SK-N-SH (cell line): ENCODE measurements at regions of chr6 and their contacts with region 1.

Region 1: DNA sequence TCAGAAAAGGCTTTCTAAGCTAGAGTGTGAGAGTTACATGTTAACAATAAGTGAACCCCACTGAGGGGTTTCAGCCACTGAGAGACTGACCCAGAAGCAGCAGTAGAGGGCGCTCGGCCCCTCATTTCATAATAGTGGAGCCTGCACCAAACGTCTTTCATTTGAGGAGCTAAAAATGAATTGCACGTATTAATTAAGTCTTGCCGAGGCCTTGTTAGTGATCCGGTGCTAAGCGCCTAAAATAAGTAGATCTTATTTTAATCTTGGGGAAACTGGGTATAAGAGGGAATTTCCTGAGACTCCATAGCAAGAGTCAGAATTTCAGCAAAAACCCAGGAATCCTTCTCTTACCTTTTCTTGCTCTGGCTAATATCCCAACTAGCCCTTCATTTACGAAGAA is 209.7 kb downstream of the FARS2 start:
- DNase-seq: peak; percentile 66
- H3K4me3 ChIP-seq: peak overlapping the region in 1 of 2 experiments; percentile 3; a peak in 1 of 4 replicates
- H3K27ac ChIP-seq: no peak overlapping the region; a peak in 2 of 4 replicates
- H3K4me1 ChIP-seq: peaks cover 20 to 35% of the 10 kb centered on the region in 2 experiments; a peak in 3 of 4 replicates
- H3K27me3 ChIP-seq: no peaks in the 10 kb centered on the region
- CTCF ChIP-seq: peak; percentile 98
- EP300 ChIP-seq: no peak
- RAD21 ChIP-seq: peak; percentile 92

Region 2: GRCh38 chr6:5435449-5435848 is 35.6 kb before region 1 on chr6:
- CTCF ChIA-PET with region 1: no interaction called
- POLR2A ChIA-PET with region 1: no interaction called
- DNase-seq: no peak
- H3K4me3 ChIP-seq: no peak overlapping the region
- H3K27ac ChIP-seq: peak overlapping the region in 1 of 2 experiments; percentile 49; a peak in 1 of 4 replicates
- H3K4me1 ChIP-seq: no peaks in the 10 kb centered on the region
- H3K27me3 ChIP-seq: no peaks in the 10 kb centered on the region
- CTCF ChIP-seq: no peak
- EP300 ChIP-seq: no peak
- RAD21 ChIP-seq: no peak

Region 3: GRCh38 chr6:5457041-5457440 is 14.0 kb before region 1 on chr6:
- CTCF ChIA-PET with region 1: interaction called, 26 read pairs
- POLR2A ChIA-PET with region 1: no interaction called
- DNase-seq: no peak
- H3K4me3 ChIP-seq: no peak overlapping the region
- H3K27ac ChIP-seq: no peak overlapping the region
- H3K4me1 ChIP-seq: peaks cover 9 to 14% of the 10 kb centered on the region in 2 experiments; a peak in 3 of 4 replicates
- H3K27me3 ChIP-seq: no peaks in the 10 kb centered on the region
- CTCF ChIP-seq: no peak
- EP300 ChIP-seq: no peak
- RAD21 ChIP-seq: no peak

Region 4: GRCh38 chr6:5665173-5665572 is 194.1 kb after region 1 on chr6:
- CTCF ChIA-PET with region 1: interaction called, 18 read pairs
- POLR2A ChIA-PET with region 1: no interaction called
- DNase-seq: no peak
- H3K4me3 ChIP-seq: no peak overlapping the region
- H3K27ac ChIP-seq: no peak overlapping the region
- H3K4me1 ChIP-seq: peaks cover 13 to 26% of the 10 kb centered on the region in 2 experiments; a peak in 3 of 4 replicates
- H3K27me3 ChIP-seq: no peaks in the 10 kb centered on the region
- CTCF ChIP-seq: no peak
- EP300 ChIP-seq: no peak
- RAD21 ChIP-seq: no peak

Region 5: DNA sequence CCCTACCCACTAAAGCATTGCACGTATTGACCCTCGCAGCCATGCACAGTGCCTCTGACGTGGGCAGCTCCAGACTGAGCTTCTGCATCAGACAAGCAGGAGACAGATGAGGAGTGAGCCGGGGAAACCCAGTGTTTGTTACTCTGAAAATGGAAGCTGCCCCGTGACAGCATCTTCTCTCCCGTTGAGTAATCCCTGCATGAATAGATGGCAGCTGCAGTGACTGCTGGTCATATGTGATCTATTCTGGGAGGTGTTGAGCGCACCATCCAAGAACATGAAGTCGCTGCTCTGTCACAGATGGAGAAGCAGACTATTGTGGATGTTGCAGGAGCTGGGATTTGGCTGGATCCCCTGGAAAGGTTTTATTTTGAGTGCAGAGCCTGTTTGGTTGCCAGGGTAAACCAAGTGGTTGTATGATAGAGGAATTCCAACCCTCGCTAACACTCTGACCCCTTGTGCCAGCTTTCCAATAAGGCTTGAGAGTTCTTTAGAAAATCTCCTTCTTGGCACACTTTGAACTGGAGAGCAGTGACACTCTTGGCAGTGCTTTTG is 293.4 kb after region 1 on chr6:
- CTCF ChIA-PET with region 1: interaction called, 11 read pairs
- POLR2A ChIA-PET with region 1: no interaction called
- DNase-seq: no peak
- H3K4me3 ChIP-seq: no peak overlapping the region
- H3K27ac ChIP-seq: no peak overlapping the region
- H3K4me1 ChIP-seq: no peaks in the 10 kb centered on the region
- H3K27me3 ChIP-seq: no peaks in the 10 kb centered on the region
- CTCF ChIP-seq: no peak
- EP300 ChIP-seq: no peak
- RAD21 ChIP-seq: no peak

Region 6: GRCh38 chr6:6003621-6004366 is 532.8 kb after region 1 on chr6:
- CTCF ChIA-PET with region 1: interaction called, 18 read pairs
- POLR2A ChIA-PET with region 1: interaction called, 4 read pairs
- DNase-seq: peak; percentile 72
- H3K4me3 ChIP-seq: peak overlapping the region; percentile 58 to 64
- H3K27ac ChIP-seq: peak overlapping the region; percentile 3 to 22; a peak in 2 of 4 replicates
- H3K4me1 ChIP-seq: peaks cover 3 to 8% of the 10 kb centered on the region in 2 experiments; a peak in 2 of 4 replicates
- H3K27me3 ChIP-seq: peaks cover 87% of the 10 kb centered on the region
- CTCF ChIP-seq: peak; percentile 15; the same call in 1 of the 2 replicates
- EP300 ChIP-seq: no peak
- RAD21 ChIP-seq: no peak